H1 (cell line): ENCODE measurements at regions of chr3 and their contacts with region 1.

Region 1: GRCh38 chr3:31567036-31567435 is 34.3 kb downstream of the STT3B start:
- DNase-seq: no peak
- H3K4me3 ChIP-seq: no peak overlapping the region
- H3K27ac ChIP-seq: no peak overlapping the region
- H3K4me1 ChIP-seq: peaks cover 5 to 11% (median 7%) of the 10 kb centered on the region in 4 experiments
- H3K27me3 ChIP-seq: no peaks in the 10 kb centered on the region
- CTCF ChIP-seq: peak; percentile 35 to 97 (median 81)
- EP300 ChIP-seq: no peak
- POLR2A ChIP-seq: no peak
- RAD21 ChIP-seq: peak; percentile 47; a peak in 3 of 4 replicates

Region 2: GRCh38 chr3:31550452-31551251 is 16.4 kb before region 1 on chr3:
- CTCF ChIA-PET with region 1: interaction called, 13 read pairs
- POLR2A ChIA-PET with region 1: interaction called, 5 read pairs
- DNase-seq: no peak
- H3K4me3 ChIP-seq: no peak overlapping the region
- H3K27ac ChIP-seq: no peak overlapping the region
- H3K4me1 ChIP-seq: no peaks in the 10 kb centered on the region; a peak in 1 of 7 replicates
- H3K27me3 ChIP-seq: no peaks in the 10 kb centered on the region
- CTCF ChIP-seq: peak in 2 of 3 experiments; percentile 29 to 52; a peak in 2 of 4 replicates
- EP300 ChIP-seq: no peak
- POLR2A ChIP-seq: no peak
- RAD21 ChIP-seq: peak; percentile 29 to 43

Region 3: GRCh38 chr3:31579828-31580227 is 12.8 kb after region 1 on chr3:
- CTCF ChIA-PET with region 1: interaction called, 10 read pairs
- POLR2A ChIA-PET with region 1: interaction called, 3 read pairs
- DNase-seq: no peak
- H3K4me3 ChIP-seq: no peak overlapping the region
- H3K27ac ChIP-seq: no peak overlapping the region
- H3K4me1 ChIP-seq: no peaks in the 10 kb centered on the region; a peak in 1 of 7 replicates
- H3K27me3 ChIP-seq: no peaks in the 10 kb centered on the region
- CTCF ChIP-seq: no peak
- EP300 ChIP-seq: no peak
- POLR2A ChIP-seq: no peak
- RAD21 ChIP-seq: no peak

Region 4: DNA sequence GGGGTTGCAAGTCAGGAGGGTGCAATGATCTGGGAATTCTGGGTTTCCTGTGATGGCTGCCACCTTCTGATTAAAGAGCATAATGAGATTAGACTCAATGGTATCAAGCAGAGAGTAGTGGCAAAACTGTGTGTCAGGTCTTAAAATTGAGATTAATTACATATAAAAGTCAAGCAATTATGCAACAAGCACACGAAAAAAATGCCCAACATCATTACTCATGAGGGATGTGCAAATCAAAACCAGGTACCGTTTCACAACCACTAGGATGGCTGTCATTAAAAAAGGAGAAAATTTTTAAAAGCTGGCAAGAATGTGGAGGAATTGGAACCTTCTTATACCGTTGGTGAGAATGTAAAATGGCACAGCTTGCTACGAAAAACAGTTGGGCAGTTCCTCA is 209.0 kb after region 1 on chr3:
- CTCF ChIA-PET with region 1: no interaction called
- POLR2A ChIA-PET with region 1: no interaction called
- DNase-seq: no peak
- H3K4me3 ChIP-seq: no peak overlapping the region
- H3K27ac ChIP-seq: no peak overlapping the region
- H3K4me1 ChIP-seq: no peaks in the 10 kb centered on the region
- H3K27me3 ChIP-seq: no peaks in the 10 kb centered on the region
- CTCF ChIP-seq: no peak
- EP300 ChIP-seq: no peak
- POLR2A ChIP-seq: no peak
- RAD21 ChIP-seq: no peak